ENCODE measurements at regions of chr17 and their contacts with region 1.

Region 1: GRCh38 chr17:7844292-7845154 is 10.3 kb upstream of the TMEM88 start:
- DNase-seq: peak; percentile 67 to 94 (median 79)
- ATAC-seq: peak; percentile 8
- H3K4me3 ChIP-seq: peak overlapping the region; percentile 94 to 98
- H3K4me3 Mint-ChIP-seq: peak overlapping the region; percentile 91
- H3K27ac ChIP-seq: peak overlapping the region; percentile 98 to 100
- H3K27ac Mint-ChIP-seq: peak overlapping the region; percentile 99
- H3K4me1 ChIP-seq: peaks cover 39% of the 10 kb centered on the region
- H3K4me1 Mint-ChIP-seq: peaks cover 33% of the 10 kb centered on the region
- H3K27me3 ChIP-seq: no peaks in the 10 kb centered on the region
- H3K27me3 Mint-ChIP-seq: no peaks in the 10 kb centered on the region
- CTCF ChIP-seq: no peak

Region 2: GRCh38 chr17:7823581-7824397 is 20.7 kb before region 1 on chr17:
- CTCF ChIA-PET with region 1: interaction called, 26 read pairs
- POLR2A ChIA-PET with region 1: no interaction called
- intact Hi-C with region 1: loop called in 1 of 2 experiments (anchors 1 kb)
- DNase-seq: no peak
- ATAC-seq: no peak
- H3K4me3 ChIP-seq: no peak overlapping the region
- H3K4me3 Mint-ChIP-seq: no peak overlapping the region
- H3K27ac ChIP-seq: no peak overlapping the region
- H3K27ac Mint-ChIP-seq: no peak overlapping the region
- H3K4me1 ChIP-seq: no peaks in the 10 kb centered on the region
- H3K4me1 Mint-ChIP-seq: no peaks in the 10 kb centered on the region
- H3K27me3 ChIP-seq: no peaks in the 10 kb centered on the region
- H3K27me3 Mint-ChIP-seq: no peaks in the 10 kb centered on the region
- CTCF ChIP-seq: no peak

Region 3: DNA sequence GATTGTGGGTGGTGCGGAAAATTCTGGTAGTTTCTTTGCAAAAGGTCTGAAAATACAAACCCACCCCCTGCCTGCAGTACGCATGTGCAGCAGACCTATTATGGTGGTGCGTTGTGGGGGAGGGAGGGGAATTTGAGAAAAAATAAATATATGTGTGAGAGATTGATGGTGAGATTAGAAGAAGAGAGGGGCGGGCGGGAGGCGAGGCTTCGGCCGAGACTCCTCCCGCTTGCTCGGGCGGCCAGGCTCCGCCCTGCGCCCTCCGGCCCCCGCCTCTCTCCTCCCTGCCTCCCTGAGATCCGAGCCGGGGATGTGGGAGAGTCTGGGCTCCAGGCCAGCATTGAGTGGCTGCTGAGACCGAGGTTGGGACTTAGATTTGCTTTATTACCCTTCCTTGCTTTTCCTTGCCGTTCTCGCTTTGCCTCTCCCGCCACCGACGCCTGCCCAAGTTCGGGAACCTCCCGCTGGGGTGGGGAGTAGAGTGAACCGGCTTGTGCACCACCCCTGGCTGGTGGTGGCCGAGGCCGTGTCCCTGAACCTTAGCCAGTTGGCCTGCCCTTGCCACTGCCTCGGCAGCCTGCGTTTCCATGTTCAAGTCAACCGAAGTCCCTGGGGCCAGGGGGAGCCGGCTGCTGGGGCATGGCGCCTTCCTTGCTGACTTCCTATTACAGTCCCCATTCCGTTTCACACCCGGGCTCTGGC is 43.1 kb after region 1 on chr17:
- CTCF ChIA-PET with region 1: no interaction called
- POLR2A ChIA-PET with region 1: no interaction called
- intact Hi-C with region 1: loop called in 1 of 2 experiments (anchors 1 kb)
- DNase-seq: peak; percentile 73 to 97 (median 87)
- ATAC-seq: peak; percentile 71
- H3K4me3 ChIP-seq: peak overlapping the region; percentile 86 to 89
- H3K4me3 Mint-ChIP-seq: no peak overlapping the region
- H3K27ac ChIP-seq: peak overlapping the region; percentile 61 to 80
- H3K27ac Mint-ChIP-seq: no peak overlapping the region
- H3K4me1 ChIP-seq: peaks cover 30% of the 10 kb centered on the region
- H3K4me1 Mint-ChIP-seq: peaks cover 13% of the 10 kb centered on the region
- H3K27me3 ChIP-seq: no peaks in the 10 kb centered on the region
- H3K27me3 Mint-ChIP-seq: no peaks in the 10 kb centered on the region
- CTCF ChIP-seq: no peak

Region 4: DNA sequence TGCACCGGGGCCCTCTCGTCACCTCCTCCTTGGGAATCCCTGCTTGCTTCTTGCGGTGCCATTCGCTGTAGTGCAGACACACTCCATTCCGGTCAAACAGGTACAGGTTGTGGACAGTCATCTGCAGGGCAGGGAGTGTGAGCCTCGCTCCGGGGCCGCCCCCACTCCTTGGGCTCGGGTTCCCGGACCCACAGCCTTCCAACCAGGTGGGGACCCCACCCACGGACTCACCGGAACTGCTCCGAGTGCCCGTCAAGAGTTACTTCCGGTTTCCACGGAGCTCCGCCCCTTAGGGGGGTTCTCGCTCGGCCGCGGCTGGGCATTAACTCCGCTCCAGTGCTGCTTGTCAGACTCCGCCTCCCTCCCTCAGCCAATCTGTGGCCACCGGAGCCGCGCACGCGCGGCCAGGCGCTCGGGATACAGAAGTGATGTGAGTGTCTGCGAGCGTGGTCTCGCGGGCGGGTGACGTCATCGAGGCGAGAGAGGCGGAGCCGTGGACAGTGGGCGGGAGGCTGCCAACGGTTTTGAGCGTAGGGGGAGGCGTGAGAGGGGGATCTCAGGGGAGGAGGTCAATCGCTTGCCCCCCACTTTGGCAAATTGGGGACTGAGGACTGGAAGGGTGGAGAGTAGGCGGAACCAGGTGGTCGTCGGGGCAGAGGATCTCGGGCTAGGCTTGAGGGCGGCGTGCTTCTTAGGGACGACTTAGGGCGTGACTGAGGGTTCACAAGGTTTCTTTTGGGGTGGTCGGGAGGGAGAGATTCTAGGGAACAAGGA is 87.4 kb after region 1 on chr17 and contains the starts of genes CNTROB and TRAPPC1:
- CTCF ChIA-PET with region 1: no interaction called
- POLR2A ChIA-PET with region 1: no interaction called
- intact Hi-C with region 1: loop called in 1 of 2 experiments (anchors 1 kb)
- DNase-seq: peak; percentile 99 to 100 (median 99)
- ATAC-seq: peak; percentile 93
- H3K4me3 ChIP-seq: peak within 1 kb of the TSS; percentile 96
- H3K4me3 Mint-ChIP-seq: peak within 1 kb of the TSS; percentile 100
- H3K27ac ChIP-seq: peak within 1 kb of the TSS; percentile 85
- H3K27ac Mint-ChIP-seq: peak within 1 kb of the TSS; percentile 99
- H3K4me1 ChIP-seq: peaks cover 22% of the 10 kb centered on the region
- H3K4me1 Mint-ChIP-seq: peaks cover 50% of the 10 kb centered on the region
- H3K27me3 ChIP-seq: no peaks in the 10 kb centered on the region
- H3K27me3 Mint-ChIP-seq: no peaks in the 10 kb centered on the region
- CTCF ChIP-seq: no peak
- total RNA-seq, gene CNTROB: 20.1 to 23.6 TPM
- total RNA-seq, gene TRAPPC1: 29.6 to 39.4 TPM

Region 5: DNA sequence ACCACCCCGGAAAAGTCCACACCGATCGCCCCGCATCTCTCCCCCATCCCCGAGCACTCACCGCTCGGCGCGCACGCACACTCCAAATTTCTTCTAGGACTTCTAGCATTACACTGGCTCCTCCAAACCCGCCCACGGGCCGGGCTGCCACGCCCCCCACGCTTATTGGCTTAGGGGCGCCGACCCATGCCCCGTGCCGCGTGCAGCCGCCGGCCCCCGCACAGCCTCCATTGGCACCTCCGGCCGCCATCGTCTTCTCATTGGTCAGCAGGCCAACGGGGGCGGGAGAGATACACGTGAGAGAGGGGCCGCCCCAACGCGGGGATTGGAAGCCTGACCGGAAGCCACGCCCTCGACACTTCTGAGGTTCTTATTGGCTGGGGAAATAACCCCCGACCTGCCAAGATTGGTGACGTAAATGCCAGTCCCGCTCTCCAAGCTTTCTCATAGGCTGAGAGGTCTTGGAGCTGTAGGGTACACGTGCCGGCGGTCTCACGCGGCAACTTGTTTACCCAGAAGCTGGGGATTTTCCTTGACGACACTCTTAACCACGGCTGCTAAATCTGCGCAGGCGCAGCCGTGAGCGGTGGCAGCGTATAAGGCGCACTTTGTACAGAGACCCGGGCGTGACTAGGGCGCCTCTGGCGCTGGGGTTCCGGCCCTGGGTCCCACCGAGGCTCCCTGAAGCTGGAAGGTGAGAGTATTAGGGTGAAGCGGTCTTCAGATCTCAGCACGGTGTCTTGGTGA is 311.9 kb after region 1 on chr17:
- CTCF ChIA-PET with region 1: no interaction called
- POLR2A ChIA-PET with region 1: no interaction called
- intact Hi-C with region 1: loop called (anchors 2 to 5 kb)
- DNase-seq: peak; percentile 100
- ATAC-seq: peak; percentile 68
- H3K4me3 ChIP-seq: peak overlapping the region; percentile 82 to 90
- H3K4me3 Mint-ChIP-seq: no peak overlapping the region
- H3K27ac ChIP-seq: peak overlapping the region; percentile 100
- H3K27ac Mint-ChIP-seq: no peak overlapping the region
- H3K4me1 ChIP-seq: peaks cover 77% of the 10 kb centered on the region
- H3K4me1 Mint-ChIP-seq: peaks cover 68% of the 10 kb centered on the region
- H3K27me3 ChIP-seq: no peaks in the 10 kb centered on the region
- H3K27me3 Mint-ChIP-seq: no peaks in the 10 kb centered on the region
- CTCF ChIP-seq: no peak